Caco-2 (cell line): ENCODE measurements at regions of chr13 and their contacts with region 1.

Region 1: DNA sequence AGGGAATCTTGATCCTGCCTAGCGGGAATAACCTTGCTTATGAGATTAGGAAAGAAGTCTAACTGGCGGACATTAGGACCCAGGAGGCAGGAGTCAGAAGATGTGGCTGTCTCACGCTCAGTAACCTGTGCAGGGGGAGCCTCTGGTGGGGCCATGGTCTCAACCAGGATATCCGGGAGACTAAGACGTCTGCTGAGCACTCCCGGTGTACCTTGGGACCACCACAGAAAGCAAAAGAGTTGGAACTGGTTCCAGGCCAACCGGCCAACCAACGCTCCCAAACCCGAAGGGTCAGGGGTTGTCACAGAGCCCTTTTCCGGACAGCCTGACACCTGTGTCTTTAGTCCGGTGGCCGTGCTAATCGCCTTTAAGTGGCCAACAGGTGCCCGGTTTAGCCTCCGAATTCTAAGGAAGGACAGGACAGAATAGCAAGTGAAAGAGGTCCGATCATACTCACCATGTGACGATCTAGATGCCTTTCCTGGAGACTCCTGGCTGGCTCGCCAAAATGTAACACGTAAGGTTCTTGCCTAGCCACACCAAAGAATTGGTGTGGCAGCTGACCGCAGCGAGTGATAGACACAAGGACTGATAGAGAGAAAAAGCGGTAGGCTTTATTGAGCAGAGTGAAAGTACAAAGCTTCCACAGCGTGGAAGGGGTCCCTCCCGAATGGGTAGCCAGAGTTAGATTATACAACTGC is 103.9 kb upstream of the DIAPH3 start:
- DNase-seq: peak; percentile 78 to 81
- H3K4me3 ChIP-seq: peak overlapping the region; percentile 55
- H3K4me3 Mint-ChIP-seq: no peak overlapping the region
- H3K27ac Mint-ChIP-seq: no peak overlapping the region
- H3K4me1 ChIP-seq: peaks cover 39% of the 10 kb centered on the region
- H3K4me1 Mint-ChIP-seq: peaks cover 9% of the 10 kb centered on the region
- H3K27me3 ChIP-seq: no peaks in the 10 kb centered on the region
- H3K27me3 Mint-ChIP-seq: no peaks in the 10 kb centered on the region
- CTCF ChIP-seq: no peak

Region 2: GRCh38 chr13:60134376-60134775 is 133.3 kb before region 1 on chr13:
- CTCF ChIA-PET with region 1: no interaction called
- POLR2A ChIA-PET with region 1: no interaction called
- intact Hi-C with region 1: loop called (anchors 1 kb)
- DNase-seq: no peak
- H3K4me3 ChIP-seq: no peak overlapping the region
- H3K4me3 Mint-ChIP-seq: no peak overlapping the region
- H3K27ac Mint-ChIP-seq: no peak overlapping the region
- H3K4me1 ChIP-seq: peaks cover 33% of the 10 kb centered on the region
- H3K4me1 Mint-ChIP-seq: peaks cover 33% of the 10 kb centered on the region
- H3K27me3 ChIP-seq: no peaks in the 10 kb centered on the region
- H3K27me3 Mint-ChIP-seq: no peaks in the 10 kb centered on the region
- CTCF ChIP-seq: no peak

Region 3: DNA sequence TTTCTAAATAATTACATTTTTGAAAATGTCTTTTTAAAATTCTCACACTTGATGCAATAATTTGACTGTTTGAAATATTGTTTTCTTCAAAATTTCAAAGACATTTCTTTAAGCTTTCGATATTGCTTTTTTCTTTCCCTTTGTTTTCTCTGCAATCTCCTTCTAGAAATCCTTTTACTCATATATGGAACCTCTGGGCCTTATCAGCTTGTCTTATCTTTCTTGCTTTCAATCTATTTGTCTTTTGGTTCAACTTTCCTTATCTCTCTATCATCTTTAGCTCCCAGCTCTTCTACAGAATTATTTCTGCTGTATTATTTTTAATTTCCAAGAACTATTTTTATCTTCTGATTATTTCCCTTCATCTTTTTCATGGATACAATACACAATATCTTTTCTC is 23.3 kb before region 1 on chr13:
- CTCF ChIA-PET with region 1: no interaction called
- POLR2A ChIA-PET with region 1: no interaction called
- intact Hi-C with region 1: loop called (anchors 2 kb)
- DNase-seq: no peak
- H3K4me3 ChIP-seq: no peak overlapping the region
- H3K4me3 Mint-ChIP-seq: peak overlapping the region; percentile 7
- H3K27ac Mint-ChIP-seq: no peak overlapping the region
- H3K4me1 ChIP-seq: peaks cover 25% of the 10 kb centered on the region
- H3K4me1 Mint-ChIP-seq: peaks cover 24% of the 10 kb centered on the region
- H3K27me3 ChIP-seq: no peaks in the 10 kb centered on the region
- H3K27me3 Mint-ChIP-seq: no peaks in the 10 kb centered on the region
- CTCF ChIP-seq: no peak